Left ventricle myocardium superior (tissue), 1 donor: ENCODE measurements at regions of chr7 and their contacts with region 1.

Region 1: DNA sequence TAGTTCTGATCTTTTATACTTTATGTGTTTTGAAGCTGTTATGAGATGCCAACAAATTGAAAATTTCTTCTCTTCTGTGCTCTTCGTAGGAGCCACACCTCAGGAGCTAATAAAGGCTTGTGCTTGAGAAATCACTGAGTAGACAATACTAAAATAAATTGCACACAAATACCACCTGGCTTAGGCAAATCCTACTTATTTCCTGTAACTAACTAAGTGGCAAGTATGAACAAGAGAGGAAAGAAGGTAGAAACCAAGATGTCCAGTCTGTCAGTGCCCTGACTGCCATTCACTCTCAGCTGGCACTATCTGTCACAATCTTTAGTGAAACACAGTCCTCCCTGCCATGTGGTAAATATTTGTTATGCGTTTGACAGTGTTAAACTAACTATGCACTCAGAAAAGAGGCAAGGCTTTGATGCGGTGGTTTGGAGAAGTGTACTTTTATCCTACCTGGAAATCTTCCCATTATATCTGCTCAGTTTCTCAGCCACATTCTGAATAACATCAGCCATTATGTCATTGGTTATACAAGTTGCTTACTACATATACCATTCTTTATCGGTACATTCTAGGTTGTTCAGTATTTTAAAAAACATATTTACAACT is 293.4 kb upstream of the VWC2 start:
- DNase-seq: no peak
- ATAC-seq: no peak

Region 2: GRCh38 chr7:49791088-49791741 is 311.2 kb after region 1 on chr7:
- intact Hi-C with region 1: loop called (anchors 1 kb)
- DNase-seq: no peak
- ATAC-seq: peak; percentile 84